ENCODE measurements at regions of chr13 and their contacts with region 1.

Region 1: DNA sequence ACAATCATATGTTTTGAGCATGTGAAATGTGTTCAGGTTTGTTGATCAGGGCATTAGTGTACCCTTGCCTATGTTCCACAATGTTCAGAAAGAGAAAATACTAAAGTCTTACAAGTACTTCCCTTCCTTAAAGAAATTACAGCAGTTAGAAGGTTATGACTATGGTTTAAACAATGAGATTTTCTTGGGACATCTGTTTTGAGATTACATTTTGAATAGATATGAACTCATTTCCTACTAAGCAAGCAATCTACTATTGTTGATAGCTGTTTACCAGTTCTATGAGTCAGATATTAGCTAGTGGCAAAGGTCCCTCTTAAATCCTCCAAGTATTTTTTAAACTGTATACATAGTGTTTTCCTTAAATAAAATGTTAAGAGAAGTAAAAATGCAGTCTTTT is 241.3 kb downstream of the DACH1 start:
- DNase-seq: peak; percentile 63
- H3K4me3 ChIP-seq: no peak overlapping the region
- H3K27ac ChIP-seq: no peak overlapping the region
- H3K4me1 ChIP-seq: peaks cover 43% of the 10 kb centered on the region
- H3K27me3 ChIP-seq: no peaks in the 10 kb centered on the region
- CTCF ChIP-seq: no peak

Region 2: DNA sequence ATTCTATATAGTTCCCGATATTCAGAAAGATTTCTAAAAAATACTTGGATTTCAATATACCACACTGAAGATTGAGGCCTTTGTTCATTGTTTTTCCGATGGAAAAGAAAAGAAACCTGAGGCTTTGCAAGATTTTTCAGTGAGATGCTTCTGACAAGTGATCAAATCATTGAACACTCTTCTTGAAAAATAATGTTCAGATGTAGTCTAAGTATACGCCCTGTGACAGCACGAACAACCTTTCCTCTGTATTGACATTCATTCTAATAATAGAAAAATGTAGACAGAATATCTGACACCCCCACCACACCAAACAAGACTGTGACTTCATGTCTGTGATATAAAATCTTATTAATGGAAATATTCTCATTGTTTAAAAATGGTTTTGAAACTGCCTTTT is 866.8 kb before region 1 on chr13:
- CTCF ChIA-PET with region 1: no interaction called
- POLR2A ChIA-PET with region 1: no interaction called
- intact Hi-C with region 1: no loop called
- DNase-seq: no peak
- H3K4me3 ChIP-seq: no peak overlapping the region
- H3K27ac ChIP-seq: no peak overlapping the region
- H3K4me1 ChIP-seq: no peaks in the 10 kb centered on the region
- H3K27me3 ChIP-seq: peaks cover 24% of the 10 kb centered on the region
- CTCF ChIP-seq: no peak

Region 3: DNA sequence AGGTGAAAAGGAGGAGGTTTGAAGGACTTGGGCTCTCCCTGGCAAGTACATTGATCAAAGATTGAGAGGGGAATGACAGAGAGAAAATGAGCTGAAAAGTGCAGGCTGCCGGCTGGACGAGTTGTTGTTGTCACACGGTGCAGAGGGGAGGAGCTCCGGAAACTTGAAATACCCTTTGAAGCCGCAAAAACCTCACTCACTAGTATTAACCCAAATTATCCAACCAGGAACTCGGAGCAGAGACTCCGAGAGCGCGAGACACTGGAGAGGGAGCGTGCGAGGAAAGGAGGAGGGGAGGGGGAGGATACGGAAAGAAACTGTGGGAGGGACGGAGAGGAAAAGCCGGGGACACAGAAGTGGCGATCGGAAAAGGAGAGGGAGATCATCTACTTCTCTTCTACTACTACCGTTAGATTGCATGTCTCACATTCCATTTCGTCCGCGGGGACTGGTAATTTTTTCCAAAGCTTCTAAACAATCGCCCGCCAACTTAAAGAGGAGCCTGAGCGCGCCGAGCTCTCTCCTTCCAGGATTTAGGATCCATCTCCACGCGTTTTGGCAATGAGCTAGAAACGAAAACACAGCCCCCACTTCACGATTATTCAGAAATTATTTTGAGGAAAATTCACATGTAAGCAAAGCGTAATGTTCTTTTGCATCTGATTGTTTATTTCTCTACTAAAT is 241.6 kb after region 1 on chr13 and contains the start of gene DACH1:
- CTCF ChIA-PET with region 1: no interaction called
- POLR2A ChIA-PET with region 1: no interaction called
- intact Hi-C with region 1: loop called (anchors 10 kb)
- DNase-seq: peak; percentile 75
- H3K4me3 ChIP-seq: peak within 1 kb of the TSS; percentile 49
- H3K27ac ChIP-seq: no peak within 1 kb of the TSS
- H3K4me1 ChIP-seq: peaks cover 10% of the 10 kb centered on the region
- H3K27me3 ChIP-seq: peaks cover 96% of the 10 kb centered on the region
- CTCF ChIP-seq: no peak
- total RNA-seq, gene DACH1: 0.11 and 0.22 TPM in 2 replicates

Region 4: GRCh38 chr13:72121466-72121865 is 495.8 kb after region 1 on chr13:
- CTCF ChIA-PET with region 1: no interaction called
- POLR2A ChIA-PET with region 1: no interaction called
- intact Hi-C with region 1: no loop called
- DNase-seq: no peak
- H3K4me3 ChIP-seq: no peak overlapping the region
- H3K27ac ChIP-seq: no peak overlapping the region
- H3K4me1 ChIP-seq: no peaks in the 10 kb centered on the region
- H3K27me3 ChIP-seq: no peaks in the 10 kb centered on the region
- CTCF ChIP-seq: no peak

Region 5: DNA sequence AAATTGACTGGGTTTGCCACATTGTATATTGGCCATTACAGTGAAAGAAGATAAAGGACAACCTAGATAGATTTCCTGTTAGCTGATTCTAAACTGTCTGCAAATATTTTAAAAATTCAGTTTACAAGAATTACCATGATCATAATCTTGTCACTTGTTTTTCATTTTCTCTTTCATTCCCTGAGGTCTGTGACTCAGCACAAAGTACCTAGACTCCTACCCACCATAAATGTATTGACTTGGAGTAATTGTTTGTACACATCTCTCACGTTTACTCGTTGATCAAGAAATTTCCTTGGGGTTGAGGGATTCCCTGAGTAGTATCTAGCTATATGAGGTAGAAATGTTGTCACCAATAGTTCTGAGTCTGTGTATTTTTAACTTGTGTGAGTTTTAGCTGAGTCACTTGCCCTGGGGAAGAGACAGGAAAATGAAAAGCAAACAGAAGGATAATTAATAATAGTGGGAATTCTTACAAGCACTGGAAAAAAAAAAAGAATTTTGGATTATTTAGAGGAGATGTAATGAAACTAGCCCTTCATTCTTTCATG is 540.5 kb after region 1 on chr13:
- CTCF ChIA-PET with region 1: no interaction called
- POLR2A ChIA-PET with region 1: no interaction called
- intact Hi-C with region 1: no loop called
- DNase-seq: no peak
- H3K4me3 ChIP-seq: no peak overlapping the region
- H3K27ac ChIP-seq: no peak overlapping the region
- H3K4me1 ChIP-seq: no peaks in the 10 kb centered on the region
- H3K27me3 ChIP-seq: peaks cover 32% of the 10 kb centered on the region
- CTCF ChIP-seq: no peak